Activated T-helper 1 cell treated with anti-CD3 and anti-CD28 coated beads, Interleukin-12 subunit alpha, Interleukin-12 subunit beta, Interleukin-2, Interleukin-4 antibody, amounts not matched to agents 30 ng/mL and 10 ng/mL and 1 ng/mL, durations not matched to agents 14 hours and 24 hours and 36 hours (primary cell): ENCODE measurements at regions of chr3 and their contacts with region 1.

Region 1: DNA sequence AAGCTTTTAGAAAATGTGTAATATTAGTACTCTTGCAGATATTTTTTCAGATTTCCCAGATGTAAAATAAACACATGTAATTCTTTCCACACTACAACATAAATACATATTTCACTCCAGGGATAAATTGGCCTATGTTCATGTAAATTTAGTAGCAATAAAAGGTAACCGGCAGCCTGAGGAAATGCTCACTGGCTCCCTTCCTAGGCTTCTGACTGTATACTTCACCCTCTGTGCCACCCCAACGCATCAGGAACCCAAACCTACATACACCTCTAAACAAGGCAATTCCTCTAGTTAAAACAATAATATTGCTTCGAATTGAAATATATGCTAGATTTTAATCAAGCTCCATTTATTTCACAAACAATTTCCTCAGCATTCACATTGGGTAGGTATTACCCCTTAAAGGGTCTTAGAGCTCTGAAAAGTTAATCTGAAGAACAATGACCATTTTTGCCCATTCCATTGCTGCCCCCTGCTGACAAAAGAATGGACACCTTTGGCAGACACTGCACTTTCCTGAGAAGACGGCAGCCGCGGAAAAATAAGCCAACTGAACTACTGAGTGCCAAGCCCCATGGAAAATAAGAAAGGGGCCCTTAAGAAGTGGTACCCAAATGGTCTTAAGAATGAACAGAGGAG is 212.5 kb downstream of the OSBPL10 start:
- DNase-seq: peak; percentile 42
- H3K4me3 Mint-ChIP-seq: peak overlapping the region; percentile 41
- H3K27ac Mint-ChIP-seq: peak overlapping the region; percentile 52
- H3K4me1 Mint-ChIP-seq: peaks cover 82% of the 10 kb centered on the region
- H3K27me3 Mint-ChIP-seq: no peaks in the 10 kb centered on the region

Region 2: DNA sequence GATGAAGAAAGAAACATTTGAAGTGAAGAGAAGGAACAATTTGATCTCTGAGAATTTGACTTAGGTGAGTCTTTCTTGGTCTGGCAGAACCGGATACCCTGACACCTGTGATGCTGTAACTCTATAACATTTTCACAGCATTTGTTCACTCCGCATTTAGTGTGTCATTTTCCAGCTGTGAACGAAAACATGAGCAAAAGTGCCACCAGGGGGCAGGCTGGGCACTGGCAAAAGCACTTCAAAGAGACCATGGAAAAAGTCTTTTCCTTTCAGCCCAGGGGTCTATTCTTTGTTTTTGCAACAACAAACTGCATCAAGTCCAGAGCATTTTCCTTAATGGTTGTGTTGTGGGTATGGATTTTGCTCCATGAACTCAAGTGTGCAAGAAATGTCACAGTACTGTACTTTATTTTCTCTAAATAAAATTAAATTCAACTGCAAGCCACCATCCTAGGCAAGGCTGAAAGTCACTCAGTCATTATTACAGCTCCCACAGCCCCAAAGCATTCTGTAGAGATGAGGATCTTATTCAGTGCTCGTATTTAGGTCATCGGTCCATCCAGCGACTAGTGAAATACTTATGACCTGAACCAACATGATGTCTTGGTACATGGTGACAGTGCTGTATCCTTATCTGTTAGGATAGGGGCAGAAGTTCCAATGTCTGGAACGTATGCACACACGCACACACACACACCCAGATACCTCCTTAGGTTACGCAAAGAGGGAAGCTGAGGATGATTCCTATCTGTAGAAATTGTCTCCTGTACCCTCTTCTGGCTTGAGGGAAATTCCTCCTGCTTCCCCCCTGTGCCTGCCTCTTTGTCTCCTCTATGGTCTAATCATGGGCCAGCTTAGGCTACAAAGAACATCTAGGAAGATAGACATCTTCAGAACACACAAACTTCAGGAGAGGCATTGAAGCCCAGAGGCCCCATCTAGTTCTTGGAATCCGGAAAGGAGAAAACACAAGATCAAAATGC is 999.6 kb before region 1 on chr3:
- intact Hi-C with region 1: loop called (anchors 1 kb)
- DNase-seq: peak; percentile 59
- H3K4me3 Mint-ChIP-seq: no peak overlapping the region
- H3K27ac Mint-ChIP-seq: no peak overlapping the region
- H3K4me1 Mint-ChIP-seq: peaks cover 14% of the 10 kb centered on the region
- H3K27me3 Mint-ChIP-seq: peaks cover 20% of the 10 kb centered on the region

Region 3: DNA sequence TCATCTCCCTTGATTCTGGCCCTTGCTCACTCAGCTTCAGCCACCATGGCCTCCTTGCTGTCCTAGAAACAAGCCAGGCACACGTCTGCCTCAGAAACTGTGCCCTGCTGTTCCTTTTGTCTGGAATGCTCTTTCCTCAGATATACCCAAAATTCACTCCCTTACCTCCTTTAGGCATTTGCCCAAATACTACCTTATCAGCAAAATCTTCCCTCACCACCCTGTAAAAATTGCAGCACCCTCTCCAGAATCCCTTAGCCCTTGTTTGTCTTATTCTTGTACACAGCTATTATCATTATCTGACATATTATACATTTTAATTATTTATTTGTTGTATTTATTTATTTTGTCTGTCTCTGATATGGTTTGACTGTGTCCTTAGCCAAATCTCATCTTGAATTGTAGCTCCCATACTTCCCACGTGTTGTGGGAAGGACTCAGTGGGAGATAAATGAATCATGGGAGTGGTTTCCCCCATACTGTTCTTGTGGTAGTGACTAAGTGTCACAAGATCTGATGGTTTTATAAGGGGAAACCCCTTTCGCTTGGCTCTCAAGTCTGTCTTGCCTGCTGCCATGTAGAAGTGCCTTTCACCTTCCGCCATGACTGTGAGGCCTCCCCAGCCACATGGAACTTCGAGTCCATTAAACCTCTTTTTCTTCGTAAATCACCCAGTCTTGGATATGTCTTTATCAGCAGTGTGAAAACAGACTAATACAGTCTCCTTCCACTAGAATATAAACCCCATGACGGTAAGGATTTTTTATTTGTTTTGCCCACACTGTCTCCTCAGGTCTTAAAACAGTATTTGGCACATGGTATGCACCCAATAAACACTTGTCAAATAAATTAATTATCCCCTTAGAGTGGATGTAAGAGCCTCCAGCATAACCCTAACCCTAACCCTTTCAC is 295.9 kb before region 1 on chr3:
- intact Hi-C with region 1: loop called (anchors 5 kb)
- DNase-seq: peak; percentile 17
- H3K4me3 Mint-ChIP-seq: no peak overlapping the region
- H3K27ac Mint-ChIP-seq: peak overlapping the region; percentile 59
- H3K4me1 Mint-ChIP-seq: peaks cover 19% of the 10 kb centered on the region
- H3K27me3 Mint-ChIP-seq: peaks cover 9% of the 10 kb centered on the region

Region 4: GRCh38 chr3:31610700-31611275 is 157.8 kb before region 1 on chr3:
- intact Hi-C with region 1: loop called (anchors 1 kb)
- DNase-seq: no peak
- H3K4me3 Mint-ChIP-seq: no peak overlapping the region
- H3K27ac Mint-ChIP-seq: no peak overlapping the region
- H3K4me1 Mint-ChIP-seq: peaks cover 71% of the 10 kb centered on the region
- H3K27me3 Mint-ChIP-seq: no peaks in the 10 kb centered on the region

Region 5: GRCh38 chr3:31925271-31925630 is 156.7 kb after region 1 on chr3:
- intact Hi-C with region 1: loop called (anchors 1 kb)
- DNase-seq: no peak
- H3K4me3 Mint-ChIP-seq: peak overlapping the region; percentile 7
- H3K27ac Mint-ChIP-seq: peak overlapping the region; percentile 21
- H3K4me1 Mint-ChIP-seq: peaks cover 37% of the 10 kb centered on the region
- H3K27me3 Mint-ChIP-seq: no peaks in the 10 kb centered on the region